ENCODE measurements at regions of chr10 and their contacts with region 1.

Region 1: GRCh38 chr10:104322416-104322782 is 15.9 kb downstream of the ITPRIP start:
- DNase-seq: peak; percentile 76
- H3K4me3 Mint-ChIP-seq: peak overlapping the region; percentile 67
- H3K27ac Mint-ChIP-seq: peak overlapping the region; percentile 89
- H3K4me1 Mint-ChIP-seq: peaks cover 87% of the 10 kb centered on the region
- H3K27me3 Mint-ChIP-seq: no peaks in the 10 kb centered on the region

Region 2: GRCh38 chr10:104291439-104291951 is 30.9 kb before region 1 on chr10:
- CTCF ChIA-PET with region 1: interaction called, 26 read pairs
- POLR2A ChIA-PET with region 1: no interaction called
- DNase-seq: peak; percentile 90
- H3K4me3 Mint-ChIP-seq: no peak overlapping the region
- H3K27ac Mint-ChIP-seq: no peak overlapping the region
- H3K4me1 Mint-ChIP-seq: peaks cover 12% of the 10 kb centered on the region
- H3K27me3 Mint-ChIP-seq: peaks cover 33% of the 10 kb centered on the region

Region 3: GRCh38 chr10:104308439-104308903 is 13.9 kb before region 1 on chr10:
- CTCF ChIA-PET with region 1: interaction called, 34 read pairs
- POLR2A ChIA-PET with region 1: interaction called, 42 read pairs
- DNase-seq: no peak
- H3K4me3 Mint-ChIP-seq: no peak overlapping the region
- H3K27ac Mint-ChIP-seq: peak overlapping the region; percentile 71
- H3K4me1 Mint-ChIP-seq: peaks cover 47% of the 10 kb centered on the region
- H3K27me3 Mint-ChIP-seq: no peaks in the 10 kb centered on the region

Region 4: DNA sequence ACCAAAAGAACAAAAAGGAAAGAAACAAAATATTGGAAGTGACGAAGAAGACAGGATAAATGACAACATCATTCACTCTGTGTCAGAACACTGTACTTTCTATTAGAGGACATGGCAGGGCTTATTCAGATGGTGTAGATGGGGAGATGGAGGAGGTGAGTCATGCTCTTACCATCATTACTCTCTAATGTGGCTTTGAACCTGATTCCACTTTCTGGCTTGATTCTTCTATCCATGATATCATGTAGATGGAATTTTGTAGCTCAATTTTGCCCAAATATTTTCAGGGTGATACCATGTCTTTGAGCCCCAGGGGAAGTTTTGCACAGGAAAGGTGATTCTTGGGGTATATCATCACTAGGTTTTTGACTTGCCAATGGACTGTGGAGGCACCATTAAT is 123.0 kb after region 1 on chr10:
- CTCF ChIA-PET with region 1: no interaction called
- POLR2A ChIA-PET with region 1: no interaction called
- DNase-seq: no peak
- H3K4me3 Mint-ChIP-seq: no peak overlapping the region
- H3K27ac Mint-ChIP-seq: no peak overlapping the region
- H3K4me1 Mint-ChIP-seq: no peaks in the 10 kb centered on the region
- H3K27me3 Mint-ChIP-seq: peaks cover 25% of the 10 kb centered on the region